Endothelial cell of umbilical vein (primary cell): ENCODE measurements at regions of chr9 and their contacts with region 1.

Region 1: DNA sequence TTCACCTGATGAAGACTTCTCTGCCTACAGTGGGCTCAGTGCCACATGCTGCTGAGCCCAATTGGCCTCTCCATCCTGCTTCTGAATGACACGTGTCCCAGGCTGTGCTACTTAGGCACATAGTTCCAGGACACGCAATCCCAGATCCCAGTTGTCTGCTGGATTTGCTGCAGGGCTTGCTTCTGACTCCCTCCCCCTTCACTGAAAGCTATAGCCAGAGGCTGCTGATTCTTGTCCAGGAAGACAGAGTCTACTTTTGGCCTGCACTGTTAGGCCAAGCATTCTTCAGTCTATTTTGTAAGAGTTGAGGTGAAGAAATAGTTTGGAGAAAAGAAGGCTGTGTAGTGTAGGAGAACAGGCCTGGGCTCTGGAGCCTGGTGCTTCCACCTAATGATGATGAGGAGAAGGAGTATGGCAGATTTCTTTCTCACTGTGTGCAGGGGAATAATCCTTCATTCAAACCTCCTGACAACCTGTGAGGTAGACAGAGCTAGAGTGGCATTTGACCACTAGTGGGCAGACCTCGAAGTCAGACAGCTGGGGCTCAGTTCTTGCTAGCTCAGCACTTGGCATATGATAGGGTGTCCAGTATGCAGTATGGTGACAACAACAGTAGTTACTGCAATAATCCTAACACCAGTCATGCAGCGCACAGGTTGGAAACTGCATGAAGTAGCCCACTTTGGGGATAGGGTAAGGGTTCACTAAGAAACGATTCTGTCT is 19.5 kb upstream of the ASPN start:
- DNase-seq: peak; percentile 45
- H3K4me3 ChIP-seq: no peak overlapping the region
- H3K27ac ChIP-seq: no peak overlapping the region
- H3K4me1 ChIP-seq: no peaks in the 10 kb centered on the region
- H3K27me3 ChIP-seq: no peaks in the 10 kb centered on the region
- CTCF ChIP-seq: peak; percentile 64 to 69
- POLR2A ChIP-seq: no peak

Region 2: DNA sequence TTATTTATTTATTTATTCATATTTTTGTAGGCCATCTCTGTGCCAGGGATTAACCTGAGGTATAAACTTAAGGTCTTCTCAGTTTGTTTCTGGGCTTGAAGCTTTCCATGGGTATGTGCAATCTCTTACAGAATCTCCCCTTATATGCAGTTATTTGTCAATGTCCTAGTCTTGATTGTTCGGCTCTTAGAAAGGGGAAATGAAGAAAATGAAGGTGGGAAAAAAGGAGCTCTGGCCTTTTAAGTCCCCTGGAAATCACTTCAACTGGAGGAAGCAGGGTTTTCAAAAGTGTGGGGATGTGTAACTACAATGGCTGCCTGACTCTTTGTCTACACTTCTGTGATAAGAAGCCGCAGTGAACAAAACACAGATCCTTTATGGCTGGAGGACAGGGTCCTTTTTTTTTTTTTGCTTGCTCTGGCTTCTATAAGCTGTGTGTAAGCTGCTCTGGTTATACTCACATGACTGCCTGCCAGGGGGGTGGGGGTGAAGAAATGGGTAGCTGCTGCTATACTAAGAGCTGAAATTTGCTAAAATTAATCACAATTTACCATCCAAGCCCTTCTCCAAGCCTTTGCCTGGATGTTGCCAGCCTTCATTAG is 142.3 kb before region 1 on chr9:
- CTCF ChIA-PET with region 1: no interaction called
- POLR2A ChIA-PET with region 1: no interaction called
- dilution Hi-C with region 1: no loop called
- intact Hi-C with region 1: no loop called
- DNase-seq: no peak
- H3K4me3 ChIP-seq: no peak overlapping the region
- H3K27ac ChIP-seq: no peak overlapping the region
- H3K4me1 ChIP-seq: no peaks in the 10 kb centered on the region
- H3K27me3 ChIP-seq: no peaks in the 10 kb centered on the region
- CTCF ChIP-seq: no peak
- POLR2A ChIP-seq: no peak

Region 3: DNA sequence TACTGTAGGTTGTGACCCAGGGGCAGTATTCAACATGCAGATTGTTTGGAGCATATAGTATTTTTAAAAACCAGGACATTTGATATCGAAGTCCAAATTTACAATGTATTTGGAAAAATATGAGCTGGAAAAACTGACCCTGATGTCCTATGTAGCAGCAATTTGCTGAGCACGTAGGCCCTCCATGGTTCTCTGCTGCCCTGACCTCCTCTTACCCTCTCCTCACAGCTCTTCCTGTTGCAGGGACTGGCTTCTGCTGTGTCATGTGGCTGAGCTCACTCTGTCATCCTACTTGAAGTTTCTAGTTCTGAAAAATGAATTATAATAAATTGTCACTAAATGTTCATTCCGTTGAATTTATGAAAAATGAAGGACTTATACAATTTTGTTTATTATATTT is 15.5 kb before region 1 on chr9:
- CTCF ChIA-PET with region 1: interaction called, 14 read pairs
- POLR2A ChIA-PET with region 1: no interaction called
- dilution Hi-C with region 1: no loop called
- intact Hi-C with region 1: no loop called
- DNase-seq: peak; percentile 16
- H3K4me3 ChIP-seq: no peak overlapping the region
- H3K27ac ChIP-seq: no peak overlapping the region
- H3K4me1 ChIP-seq: peaks cover 15% of the 10 kb centered on the region
- H3K27me3 ChIP-seq: no peaks in the 10 kb centered on the region
- CTCF ChIP-seq: no peak
- POLR2A ChIP-seq: no peak

Region 4: DNA sequence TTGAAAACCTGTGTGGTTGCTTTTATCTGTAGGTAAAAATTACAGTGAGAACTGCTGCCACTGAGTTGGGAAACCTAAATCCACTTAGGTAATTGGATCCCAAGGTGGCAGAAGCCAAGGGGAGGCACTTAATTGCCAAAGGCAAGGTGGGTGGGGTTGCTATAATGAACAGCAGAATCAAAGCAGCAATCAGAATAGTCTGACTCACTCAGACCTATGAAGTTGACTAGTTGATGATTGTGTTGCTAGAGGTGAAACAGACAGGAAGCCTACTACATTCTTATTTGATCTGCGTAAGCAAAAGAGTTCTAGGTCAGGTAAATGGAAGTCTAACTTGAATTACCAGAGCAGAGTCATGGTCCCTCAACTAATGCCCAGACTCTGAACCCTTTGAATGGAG is 280.1 kb after region 1 on chr9:
- CTCF ChIA-PET with region 1: no interaction called
- POLR2A ChIA-PET with region 1: no interaction called
- dilution Hi-C with region 1: no loop called
- intact Hi-C with region 1: loop called (anchors 2 kb)
- DNase-seq: no peak
- H3K4me3 ChIP-seq: no peak overlapping the region
- H3K27ac ChIP-seq: no peak overlapping the region
- H3K4me1 ChIP-seq: no peaks in the 10 kb centered on the region
- H3K27me3 ChIP-seq: peaks cover 5 to 14% of the 10 kb centered on the region in 2 experiments
- CTCF ChIP-seq: no peak
- POLR2A ChIP-seq: no peak

Region 5: GRCh38 chr9:93589691-93590090 is 1087.9 kb after region 1 on chr9:
- CTCF ChIA-PET with region 1: no interaction called
- POLR2A ChIA-PET with region 1: no interaction called
- dilution Hi-C with region 1: no loop called
- intact Hi-C with region 1: no loop called
- DNase-seq: peak; percentile 47
- H3K4me3 ChIP-seq: no peak overlapping the region
- H3K27ac ChIP-seq: no peak overlapping the region
- H3K4me1 ChIP-seq: no peaks in the 10 kb centered on the region
- H3K27me3 ChIP-seq: no peaks in the 10 kb centered on the region
- CTCF ChIP-seq: no peak
- POLR2A ChIP-seq: no peak